ENCODE measurements at regions of chr19 and their contacts with region 1.

Region 1: DNA sequence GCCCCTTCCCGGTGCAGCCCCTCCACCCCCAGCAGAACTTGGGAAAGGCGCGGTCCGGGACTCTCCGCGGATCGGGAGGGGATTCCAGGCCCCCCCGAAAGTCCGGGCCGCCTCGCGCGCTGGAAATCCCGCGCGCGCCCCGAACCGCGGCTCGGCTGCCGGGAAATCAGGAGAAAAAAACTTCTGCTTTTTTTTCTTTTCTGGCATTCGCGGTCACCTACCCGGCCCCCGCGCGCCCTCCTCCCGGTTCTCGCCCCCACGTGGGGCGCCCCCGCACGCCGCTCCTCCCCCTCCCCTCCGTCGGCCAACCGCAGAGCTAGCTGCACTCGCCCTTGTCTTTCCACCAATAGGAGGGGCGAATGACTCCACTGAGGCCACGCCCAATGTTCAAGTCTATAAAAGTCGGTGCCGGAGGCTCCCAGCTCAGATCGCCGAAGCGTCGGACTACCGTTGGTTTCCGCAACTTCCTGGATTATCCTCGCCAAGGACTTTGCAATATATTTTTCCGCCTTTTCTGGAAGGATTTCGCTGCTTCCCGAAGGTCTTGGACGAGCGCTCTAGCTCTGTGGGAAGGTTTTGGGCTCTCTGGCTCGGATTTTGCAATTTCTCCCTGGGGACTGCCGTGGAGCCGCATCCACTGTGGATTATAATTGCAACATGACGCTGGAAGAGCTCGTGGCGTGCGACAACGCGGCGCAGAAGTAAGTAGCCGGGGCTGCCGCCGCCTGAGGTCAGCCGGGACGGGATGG is at the start of gene GADD45B:
- DNase-seq: peak; percentile 98
- H3K4me3 Mint-ChIP-seq: peak within 1 kb of the TSS; percentile 93
- H3K27ac Mint-ChIP-seq: peak within 1 kb of the TSS; percentile 91
- H3K4me1 Mint-ChIP-seq: peaks cover 18% of the 10 kb centered on the region
- H3K27me3 Mint-ChIP-seq: peaks cover 3% of the 10 kb centered on the region
- total RNA-seq, gene GADD45B: 34.5 to 38.1 TPM

Region 2: DNA sequence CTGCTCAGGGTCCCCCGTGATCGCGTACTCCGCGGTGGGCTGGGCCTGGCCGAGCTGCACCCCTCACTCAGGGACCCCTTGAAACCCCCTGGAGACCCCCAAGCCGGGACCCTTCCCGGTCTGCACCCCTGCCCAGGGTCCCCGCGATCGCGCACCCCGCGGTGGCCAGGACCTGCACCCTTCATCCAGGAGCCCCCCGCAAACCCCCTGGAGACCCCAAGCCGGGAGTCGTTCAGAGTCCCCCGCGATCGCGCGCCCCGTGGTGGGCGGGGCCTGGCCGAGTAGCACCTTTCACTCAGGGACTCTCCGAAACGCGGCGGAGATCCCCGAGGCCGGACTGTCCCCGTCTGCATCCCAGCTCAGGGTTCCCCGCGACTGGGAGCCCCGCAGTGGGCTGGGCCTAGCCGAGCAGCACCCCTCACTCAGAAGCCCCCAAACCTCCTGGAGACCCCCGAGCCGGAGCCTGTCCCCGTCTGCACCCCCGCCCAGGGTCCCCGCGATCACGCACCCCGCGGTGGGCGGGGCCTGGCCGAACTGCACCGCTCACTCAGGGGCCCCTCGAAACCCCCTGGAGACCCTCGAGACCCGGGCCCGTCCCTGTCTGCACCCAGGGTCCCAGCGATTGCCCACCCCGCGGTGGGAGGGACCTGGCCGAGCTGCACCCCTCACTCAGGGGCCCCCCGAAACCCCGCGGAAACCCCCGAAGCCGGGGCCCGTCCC is 19.9 kb before region 1 on chr19:
- CTCF ChIA-PET with region 1: interaction called, 9 read pairs
- POLR2A ChIA-PET with region 1: interaction called, 10 read pairs
- intact Hi-C with region 1: no loop called
- DNase-seq: peak; percentile 62
- H3K4me3 Mint-ChIP-seq: peak overlapping the region; percentile 83
- H3K27ac Mint-ChIP-seq: peak overlapping the region; percentile 82
- H3K4me1 Mint-ChIP-seq: peaks cover 18% of the 10 kb centered on the region
- H3K27me3 Mint-ChIP-seq: no peaks in the 10 kb centered on the region

Region 3: DNA sequence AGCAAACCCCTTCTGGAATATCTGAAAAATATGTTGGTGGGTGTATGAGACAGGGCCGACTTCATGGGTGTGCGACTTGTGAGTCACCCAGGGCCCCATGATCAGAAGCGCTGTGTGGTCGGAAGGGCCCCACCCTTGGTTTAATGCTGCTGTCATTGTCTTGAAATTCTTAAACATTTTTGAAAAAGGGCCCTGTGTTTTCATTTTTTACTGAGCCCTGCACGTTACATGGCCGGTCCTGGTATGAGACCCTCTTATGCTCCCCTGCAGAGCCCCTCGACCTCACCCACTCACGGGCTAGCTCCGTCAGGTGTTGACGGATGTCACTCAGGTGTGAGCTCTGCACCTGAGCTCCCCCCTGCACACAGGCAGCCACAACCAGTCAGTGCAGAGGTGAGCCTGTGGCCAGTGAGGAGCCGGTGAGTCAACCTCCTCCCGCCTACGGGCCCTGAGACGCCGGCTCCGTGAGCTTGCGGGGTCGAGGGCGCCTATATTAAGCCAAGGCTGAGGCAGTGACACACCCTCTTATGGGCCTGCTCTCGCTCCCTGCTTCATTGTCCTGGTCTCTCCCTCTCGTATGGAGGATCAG is 27.7 kb after region 1 on chr19:
- CTCF ChIA-PET with region 1: interaction called, 3 read pairs
- POLR2A ChIA-PET with region 1: interaction called, 27 read pairs
- intact Hi-C with region 1: loop called (anchors 2 kb)
- DNase-seq: peak; percentile 83
- H3K4me3 Mint-ChIP-seq: peak overlapping the region; percentile 49
- H3K27ac Mint-ChIP-seq: peak overlapping the region; percentile 76
- H3K4me1 Mint-ChIP-seq: peaks cover 27% of the 10 kb centered on the region
- H3K27me3 Mint-ChIP-seq: peaks cover 6% of the 10 kb centered on the region

Region 4: DNA sequence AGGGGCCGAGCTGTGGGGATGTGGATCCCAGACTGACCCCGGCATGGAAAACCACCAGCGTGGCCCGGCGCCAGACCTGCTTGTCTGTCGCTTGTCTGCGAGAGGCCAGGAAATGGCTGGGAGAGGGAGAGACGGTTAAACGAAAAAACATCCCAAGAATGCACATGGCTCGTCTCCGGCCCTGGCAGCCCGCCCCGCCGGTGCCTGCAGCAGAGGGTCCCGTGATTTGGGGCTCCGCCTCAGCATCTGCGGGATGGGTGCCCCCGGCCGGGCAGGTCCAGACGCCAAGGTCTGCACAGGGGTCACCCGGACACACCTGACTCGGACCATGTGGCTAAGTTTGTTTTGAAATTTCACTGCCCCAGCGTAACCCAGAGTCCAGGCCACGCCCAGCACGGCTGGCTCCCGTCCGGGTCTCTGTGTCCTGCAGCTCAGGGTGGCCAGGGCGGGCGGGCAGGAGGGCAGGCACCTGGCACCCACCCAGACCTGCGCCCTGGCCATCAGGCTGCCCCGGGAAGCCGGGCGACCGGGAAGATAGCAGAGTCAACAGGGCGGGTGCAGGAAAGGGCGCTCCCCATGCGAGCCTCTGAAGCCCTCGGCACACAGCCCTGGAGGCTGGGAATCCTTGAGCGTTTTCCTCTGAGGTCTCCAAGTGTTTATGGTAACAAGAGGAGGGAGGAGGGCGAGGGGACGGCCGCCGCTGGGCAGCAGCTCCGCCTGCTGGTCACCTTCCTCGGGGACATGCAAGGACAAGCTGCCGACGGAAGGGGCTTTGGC is 103.2 kb after region 1 on chr19:
- CTCF ChIA-PET with region 1: interaction called, 24 read pairs
- POLR2A ChIA-PET with region 1: interaction called, 6 read pairs
- intact Hi-C with region 1: loop called (anchors 1 kb)
- DNase-seq: peak; percentile 80
- H3K4me3 Mint-ChIP-seq: peak overlapping the region; percentile 12
- H3K27ac Mint-ChIP-seq: no peak overlapping the region
- H3K4me1 Mint-ChIP-seq: no peaks in the 10 kb centered on the region
- H3K27me3 Mint-ChIP-seq: peaks cover 13% of the 10 kb centered on the region

Region 5: GRCh38 chr19:2618611-2619010 is 142.7 kb after region 1 on chr19:
- CTCF ChIA-PET with region 1: interaction called, 174 read pairs
- POLR2A ChIA-PET with region 1: interaction called, 123 read pairs
- intact Hi-C with region 1: no loop called
- DNase-seq: peak; percentile 93
- H3K4me3 Mint-ChIP-seq: peak overlapping the region; percentile 38
- H3K27ac Mint-ChIP-seq: peak overlapping the region; percentile 91
- H3K4me1 Mint-ChIP-seq: peaks cover 62% of the 10 kb centered on the region
- H3K27me3 Mint-ChIP-seq: peaks cover 1% of the 10 kb centered on the region

Region 6: DNA sequence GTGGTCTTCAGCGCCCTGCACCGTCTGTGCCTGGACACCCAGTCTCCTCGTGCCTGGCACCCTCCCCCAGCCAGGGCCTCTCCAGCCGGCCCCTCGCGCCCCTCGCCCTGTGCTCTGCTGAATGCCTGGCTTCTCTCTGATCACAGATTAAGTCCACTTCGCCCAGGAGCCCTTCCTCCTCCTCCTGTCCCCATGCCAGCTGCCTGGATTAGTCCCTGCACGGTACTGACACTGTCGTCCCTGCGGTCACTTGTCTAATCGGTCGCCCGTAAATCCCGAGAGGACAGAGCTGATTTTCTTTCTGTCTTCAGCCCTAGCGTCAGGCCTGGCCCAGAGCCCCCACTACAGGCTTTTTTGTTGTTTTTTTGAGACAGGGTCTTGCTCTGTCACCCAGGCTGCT is 316.0 kb after region 1 on chr19:
- CTCF ChIA-PET with region 1: no interaction called
- POLR2A ChIA-PET with region 1: no interaction called
- intact Hi-C with region 1: no loop called
- DNase-seq: no peak
- H3K4me3 Mint-ChIP-seq: no peak overlapping the region
- H3K27ac Mint-ChIP-seq: no peak overlapping the region
- H3K4me1 Mint-ChIP-seq: peaks cover 18% of the 10 kb centered on the region
- H3K27me3 Mint-ChIP-seq: no peaks in the 10 kb centered on the region